ENCODE measurements at regions of chr2 and their contacts with region 1.

Region 1: GRCh38 chr2:71068218-71069035 is at the start of gene NAGK:
- DNase-seq: peak; percentile 93
- ATAC-seq: peak; percentile 89
- H3K4me3 ChIP-seq: peak within 1 kb of the TSS; percentile 67 to 88 (median 68)
- H3K27ac ChIP-seq: peak within 1 kb of the TSS; percentile 66
- H3K4me1 ChIP-seq: peaks cover 49% of the 10 kb centered on the region
- H3K27me3 ChIP-seq: peaks cover 0 to 9% of the 10 kb centered on the region in 2 experiments; a peak in 2 of 5 replicates
- CTCF ChIP-seq: peak; percentile 58
- EP300 ChIP-seq: no peak; a peak in 1 of 4 replicates
- POLR2A ChIP-seq: peak; percentile 99
- RAD21 ChIP-seq: no peak
- total RNA-seq, gene NAGK: 29.8 and 35.2 TPM in 2 replicates

Region 2: DNA sequence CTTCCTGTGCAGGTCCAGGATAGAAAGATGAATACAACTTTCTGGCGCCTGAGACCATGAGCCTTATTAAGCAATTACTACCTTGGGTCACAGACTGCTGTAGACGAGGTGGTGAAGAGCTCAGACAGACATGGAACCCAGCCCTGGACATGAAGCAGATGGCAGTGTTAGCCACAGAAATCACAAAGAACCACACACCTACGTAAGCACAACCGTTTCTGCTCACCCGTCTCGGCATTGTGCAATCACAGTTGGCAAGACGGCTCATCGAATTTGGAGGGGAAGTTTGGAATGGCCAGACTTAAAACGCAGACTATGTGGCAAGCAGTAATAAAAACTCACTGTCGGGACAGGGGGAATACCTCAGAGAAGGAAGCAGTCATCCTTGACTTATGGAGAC is 1082.7 kb before region 1 on chr2:
- CTCF ChIA-PET with region 1: no interaction called
- POLR2A ChIA-PET with region 1: no interaction called
- in situ Hi-C with region 1: no loop called
- intact Hi-C with region 1: no loop called
- DNase-seq: no peak
- ATAC-seq: no peak
- H3K4me3 ChIP-seq: no peak overlapping the region
- H3K27ac ChIP-seq: no peak overlapping the region
- H3K4me1 ChIP-seq: peaks cover 6% of the 10 kb centered on the region; the same call in 1 of the 2 replicates
- H3K27me3 ChIP-seq: no peaks in the 10 kb centered on the region; a peak in 1 of 5 replicates
- CTCF ChIP-seq: no peak
- EP300 ChIP-seq: no peak
- POLR2A ChIP-seq: no peak
- RAD21 ChIP-seq: no peak

Region 3: GRCh38 chr2:70887550-70888246 is 180.7 kb before region 1 on chr2:
- CTCF ChIA-PET with region 1: no interaction called
- POLR2A ChIA-PET with region 1: no interaction called
- in situ Hi-C with region 1: no loop called
- intact Hi-C with region 1: no loop called
- DNase-seq: no peak
- ATAC-seq: peak; percentile 40
- H3K4me3 ChIP-seq: peak overlapping the region; percentile 48 to 69 (median 54); a peak in 5 of 6 replicates
- H3K27ac ChIP-seq: no peak overlapping the region
- H3K4me1 ChIP-seq: peaks cover 37% of the 10 kb centered on the region
- H3K27me3 ChIP-seq: peaks cover 4 to 25% of the 10 kb centered on the region in 2 experiments; a peak in 3 of 5 replicates
- CTCF ChIP-seq: peak; percentile 9; the same call in 1 of the 2 replicates
- EP300 ChIP-seq: no peak
- POLR2A ChIP-seq: peak in 1 of 2 experiments; percentile 68; a peak in 2 of 4 replicates
- RAD21 ChIP-seq: no peak

Region 4: DNA sequence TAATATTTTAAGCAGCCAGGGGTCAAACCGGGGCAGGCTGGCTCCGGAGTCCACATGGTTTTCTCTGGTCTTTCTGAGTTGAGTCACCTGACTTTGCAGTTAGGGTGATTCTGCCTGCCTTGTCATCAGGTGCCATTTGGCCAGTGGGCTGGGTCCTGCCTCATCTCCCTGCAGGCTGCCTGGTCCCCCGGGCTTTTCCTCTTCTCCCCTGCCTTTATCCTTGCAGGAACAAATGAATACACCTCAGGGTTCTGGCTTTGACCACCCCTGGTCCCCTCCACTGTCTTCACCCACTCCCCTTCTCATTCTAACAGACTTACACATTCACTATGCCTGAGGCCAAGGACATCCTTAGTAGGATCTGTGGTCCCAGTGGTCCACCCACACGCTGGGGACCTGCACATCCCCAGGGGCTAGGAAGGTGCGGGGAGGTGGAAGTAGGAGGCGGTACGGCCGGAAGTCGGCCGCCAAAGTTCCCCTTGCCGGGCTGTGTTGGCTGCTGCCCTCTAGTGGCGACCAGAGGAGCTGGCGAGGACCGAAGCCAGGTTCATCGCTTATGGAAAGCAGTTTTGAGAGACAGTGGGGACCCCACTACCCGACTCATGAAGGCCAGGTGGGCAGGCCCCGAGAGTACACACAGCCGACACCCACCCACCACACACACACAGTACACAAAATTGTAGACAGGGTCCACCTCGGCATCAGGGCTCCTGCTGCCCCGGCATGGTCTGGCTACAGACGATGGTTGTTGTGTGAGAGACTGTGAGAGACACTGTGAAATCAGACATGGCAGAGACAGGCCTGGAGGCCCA is 67.4 kb before region 1 on chr2:
- CTCF ChIA-PET with region 1: no interaction called
- POLR2A ChIA-PET with region 1: interaction called, 21 read pairs
- in situ Hi-C with region 1: no loop called
- intact Hi-C with region 1: loop called (anchors 5 kb)
- DNase-seq: peak; percentile 65
- ATAC-seq: peak; percentile 78
- H3K4me3 ChIP-seq: peak overlapping the region; percentile 53 to 81 (median 71)
- H3K27ac ChIP-seq: no peak overlapping the region
- H3K4me1 ChIP-seq: peaks cover 55% of the 10 kb centered on the region
- H3K27me3 ChIP-seq: peaks cover 0 to 9% of the 10 kb centered on the region in 2 experiments; a peak in 2 of 5 replicates
- CTCF ChIP-seq: peak; percentile 99
- EP300 ChIP-seq: no peak
- POLR2A ChIP-seq: peak in 1 of 2 experiments; percentile 74; a peak in 2 of 4 replicates
- RAD21 ChIP-seq: peak; percentile 51

Region 5: DNA sequence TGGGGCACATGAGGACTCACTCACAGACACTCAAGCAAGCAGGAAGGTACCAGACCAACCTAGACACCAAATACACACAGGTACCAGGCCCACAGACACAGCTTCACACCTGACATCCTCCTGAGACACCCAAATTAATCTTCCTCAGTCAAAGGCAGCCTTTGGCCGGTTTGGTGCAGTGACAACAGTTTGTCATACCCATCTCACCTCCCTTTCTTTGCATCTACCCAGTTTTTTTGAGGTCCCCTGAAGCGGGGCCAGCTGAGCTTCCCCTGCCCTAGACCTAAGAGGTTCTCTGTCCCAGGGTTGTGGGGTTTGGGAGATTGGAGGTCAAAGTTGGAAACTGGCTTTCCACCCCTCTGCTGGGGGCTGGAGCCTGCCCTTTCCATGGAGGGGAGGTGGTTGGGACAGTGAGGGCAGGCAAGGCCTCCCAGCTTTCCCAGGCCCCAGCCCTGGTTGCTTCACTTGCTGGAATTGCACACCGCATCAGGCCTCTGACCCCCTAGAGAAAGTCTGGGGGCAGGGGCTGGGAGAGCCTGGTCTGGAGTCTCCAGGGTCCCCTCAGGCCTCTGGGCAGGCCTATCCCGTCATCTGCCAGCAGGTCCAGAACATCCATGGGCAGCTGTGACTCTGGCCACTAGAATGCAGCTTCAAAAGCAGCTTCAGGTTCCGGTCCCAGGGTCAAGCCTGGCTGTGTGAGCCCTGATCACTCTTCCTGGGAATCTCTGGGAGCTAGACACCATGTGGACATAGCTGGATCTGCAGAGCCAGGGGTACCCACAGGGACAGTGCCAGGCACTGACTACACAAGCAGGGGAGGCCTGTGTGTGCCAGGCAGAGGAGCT is 61.2 kb before region 1 on chr2:
- CTCF ChIA-PET with region 1: no interaction called
- POLR2A ChIA-PET with region 1: interaction called, 21 read pairs
- in situ Hi-C with region 1: no loop called
- intact Hi-C with region 1: loop called (anchors 5 kb)
- DNase-seq: peak; percentile 69
- ATAC-seq: peak; percentile 98
- H3K4me3 ChIP-seq: no peak overlapping the region
- H3K27ac ChIP-seq: no peak overlapping the region
- H3K4me1 ChIP-seq: peaks cover 36% of the 10 kb centered on the region
- H3K27me3 ChIP-seq: peaks cover 0 to 9% of the 10 kb centered on the region in 2 experiments; a peak in 2 of 5 replicates
- CTCF ChIP-seq: peak; percentile 60
- EP300 ChIP-seq: no peak
- POLR2A ChIP-seq: no peak
- RAD21 ChIP-seq: no peak

Region 6: DNA sequence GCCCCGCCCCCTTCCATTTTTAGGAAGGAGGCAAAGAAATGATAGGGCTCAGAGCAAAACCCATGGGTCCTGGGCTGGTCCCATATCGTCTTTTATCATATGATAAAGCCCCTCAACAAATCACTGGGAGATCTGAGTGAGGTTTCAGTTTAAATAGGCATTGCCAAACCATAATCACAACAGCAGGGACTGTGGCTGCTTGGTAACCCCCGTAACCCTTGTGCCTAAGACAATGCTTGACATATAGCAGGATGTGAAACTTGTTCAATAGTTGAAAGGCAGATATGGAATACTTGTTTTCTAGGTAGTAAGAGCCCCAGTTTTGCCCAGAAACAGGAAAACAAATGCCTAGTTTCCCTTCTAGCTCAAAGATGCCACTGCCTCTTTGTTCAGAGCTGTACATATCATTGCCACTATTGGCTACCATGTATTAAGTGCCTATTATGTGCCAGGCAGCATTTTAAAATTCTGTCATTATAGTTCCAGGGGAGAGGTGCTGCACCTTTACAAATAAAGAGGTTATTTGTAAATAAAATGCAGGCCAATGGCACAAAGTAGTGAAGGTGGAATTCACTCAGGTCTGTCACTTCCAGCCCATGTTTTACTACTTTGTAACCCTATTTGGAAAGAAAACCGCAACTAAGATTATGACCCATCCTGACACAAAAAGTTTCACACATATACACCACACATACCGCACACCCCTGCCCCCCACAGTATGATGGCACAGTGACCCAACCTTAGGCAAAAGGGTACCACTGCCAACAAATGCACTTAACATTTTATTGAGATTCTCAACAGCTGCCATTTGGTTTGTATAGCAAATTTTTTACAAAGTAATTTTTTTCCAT is 14.2 kb after region 1 on chr2:
- CTCF ChIA-PET with region 1: no interaction called
- POLR2A ChIA-PET with region 1: interaction called, 19 read pairs
- in situ Hi-C with region 1: no loop called
- intact Hi-C with region 1: no loop called
- DNase-seq: no peak
- ATAC-seq: no peak
- H3K4me3 ChIP-seq: no peak overlapping the region
- H3K27ac ChIP-seq: no peak overlapping the region
- H3K4me1 ChIP-seq: no peaks in the 10 kb centered on the region
- H3K27me3 ChIP-seq: peaks cover 0 to 15% of the 10 kb centered on the region in 2 experiments; a peak in 2 of 5 replicates
- CTCF ChIP-seq: no peak
- EP300 ChIP-seq: no peak
- POLR2A ChIP-seq: no peak
- RAD21 ChIP-seq: no peak

Region 7: DNA sequence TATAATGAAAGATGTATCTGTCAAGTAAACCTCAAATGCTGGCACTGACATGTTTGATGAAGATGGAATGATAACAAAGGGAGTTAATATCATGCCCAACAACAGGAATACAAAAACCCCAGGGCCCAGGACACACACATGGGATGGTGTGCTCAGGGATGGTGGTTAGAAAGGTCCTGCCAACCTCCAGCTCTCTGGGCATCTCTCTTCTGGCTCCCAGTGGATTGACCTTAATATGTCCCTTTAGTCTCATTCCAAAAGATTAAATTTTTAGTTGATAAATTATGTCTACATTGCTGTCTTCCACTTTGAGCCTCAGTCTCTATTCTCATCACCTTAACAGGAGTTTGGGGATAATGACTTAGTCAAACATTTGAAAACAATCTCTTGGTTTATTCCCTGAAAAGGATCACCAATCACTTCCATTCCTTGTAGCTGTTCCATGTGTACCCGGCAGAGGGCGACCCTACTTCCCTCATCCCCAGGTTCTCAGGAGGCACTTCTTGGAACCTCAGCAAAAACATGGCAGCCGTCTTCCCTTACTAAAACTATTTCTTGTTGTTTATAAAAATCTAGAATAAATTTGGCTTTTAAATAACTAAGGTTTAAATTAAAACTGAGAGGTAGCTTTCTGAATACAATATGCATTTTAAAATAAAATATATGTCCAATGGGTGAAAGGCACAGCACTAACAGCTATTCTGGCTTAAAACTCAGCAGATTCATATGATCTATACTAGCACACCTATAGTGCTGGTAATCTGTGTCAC is 32.0 kb after region 1 on chr2:
- CTCF ChIA-PET with region 1: no interaction called
- POLR2A ChIA-PET with region 1: interaction called, 13 read pairs
- in situ Hi-C with region 1: no loop called
- intact Hi-C with region 1: no loop called
- DNase-seq: peak; percentile 57
- ATAC-seq: peak; percentile 76
- H3K4me3 ChIP-seq: no peak overlapping the region
- H3K27ac ChIP-seq: no peak overlapping the region
- H3K4me1 ChIP-seq: peaks cover 45% of the 10 kb centered on the region
- H3K27me3 ChIP-seq: 0 out of 5 replicates have a peak, but pooled peaks cover 0 to 7% of the 10 kb centered on the region in 2 experiments
- CTCF ChIP-seq: peak; percentile 83
- EP300 ChIP-seq: no peak
- POLR2A ChIP-seq: no peak
- RAD21 ChIP-seq: peak; percentile 72

Region 8: GRCh38 chr2:71130113-71130904 is 61.9 kb after region 1 on chr2 and contains the starts of genes MCEE and MPHOSPH10:
- CTCF ChIA-PET with region 1: no interaction called
- POLR2A ChIA-PET with region 1: interaction called, 36 read pairs
- in situ Hi-C with region 1: no loop called
- intact Hi-C with region 1: no loop called
- DNase-seq: peak; percentile 85
- ATAC-seq: peak; percentile 89
- H3K4me3 ChIP-seq: peak within 1 kb of the TSS; percentile 82 to 94 (median 86)
- H3K27ac ChIP-seq: peak within 1 kb of the TSS; percentile 96
- H3K4me1 ChIP-seq: peaks cover 68% of the 10 kb centered on the region
- H3K27me3 ChIP-seq: no peaks in the 10 kb centered on the region; a peak in 1 of 5 replicates
- CTCF ChIP-seq: peak; percentile 30
- EP300 ChIP-seq: peak in 1 of 2 experiments; percentile 65; a peak in 1 of 4 replicates
- POLR2A ChIP-seq: peak; percentile 84 to 88
- RAD21 ChIP-seq: peak; percentile 57; the same call in 1 of the 2 replicates
- total RNA-seq, gene MCEE: 56.1 and 66.9 TPM in 2 replicates
- total RNA-seq, gene MPHOSPH10: 137 and 201 TPM in 2 replicates